Left ventricle myocardium inferior (tissue), 1 donor: ENCODE measurements at regions of chr3 and their contacts with region 1.

Region 1: DNA sequence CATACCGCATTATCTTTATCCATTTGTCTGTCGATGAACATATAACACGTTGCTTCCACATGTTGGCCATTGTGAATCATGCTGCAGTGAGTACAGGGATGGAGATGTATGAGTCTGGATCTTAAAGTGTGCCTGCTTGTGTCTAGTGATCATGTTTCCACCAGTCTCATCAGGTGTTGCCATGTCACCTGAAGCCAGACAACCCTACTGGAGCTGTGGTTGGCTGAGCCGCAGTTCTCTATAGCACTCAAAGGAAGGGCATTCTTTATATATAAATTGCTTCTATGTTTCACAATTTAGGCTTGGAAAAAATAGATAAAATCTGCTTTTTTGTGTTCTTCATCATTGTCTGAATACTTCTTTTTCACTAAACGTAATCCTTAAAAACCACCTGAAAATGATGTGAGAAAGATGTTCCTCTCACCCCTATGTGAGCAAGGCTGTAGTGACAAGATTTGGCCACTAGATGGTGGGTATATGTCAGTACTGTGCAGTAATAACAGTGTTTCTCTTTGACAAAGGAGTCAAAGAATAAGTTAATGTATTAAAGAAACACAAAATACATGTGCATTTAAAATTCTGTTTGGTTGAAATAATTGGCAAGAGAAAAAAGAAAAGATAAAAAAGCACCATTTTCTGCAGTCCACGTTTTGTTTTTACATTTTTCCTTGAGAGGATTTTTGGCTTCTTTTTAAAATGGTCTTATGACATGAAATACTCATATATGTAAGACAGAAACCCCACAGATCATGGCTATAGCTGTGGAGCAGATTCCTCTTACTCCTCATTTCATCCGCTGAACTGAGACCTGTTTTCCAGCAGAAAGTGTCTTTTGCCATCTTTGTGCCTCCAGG is 394.5 kb upstream of the DPPA4 start:
- DNase-seq: no peak
- H3K4me3 ChIP-seq: no peak overlapping the region
- H3K27ac ChIP-seq: no peak overlapping the region
- H3K4me1 ChIP-seq: no peaks in the 10 kb centered on the region
- H3K27me3 ChIP-seq: no peaks in the 10 kb centered on the region
- CTCF ChIP-seq: peak; percentile 86

Region 2: DNA sequence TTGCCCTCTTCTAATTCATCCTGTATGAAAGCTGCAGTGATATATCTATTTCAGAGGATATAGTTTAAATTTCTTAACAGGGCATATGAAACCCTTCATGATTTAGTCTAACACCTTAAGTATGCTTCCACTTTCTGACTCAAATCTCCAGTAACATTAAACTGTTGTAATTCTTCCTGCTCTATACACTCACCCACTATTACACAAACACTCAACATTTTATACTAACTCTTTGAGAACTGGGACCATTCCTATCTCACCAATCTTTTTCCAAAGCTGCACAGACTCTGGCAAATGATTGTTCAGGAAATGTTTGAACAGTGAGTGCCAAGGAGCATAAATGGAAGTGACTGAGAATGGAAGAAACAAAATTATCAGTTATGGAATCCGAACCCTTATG is 165.9 kb after region 1 on chr3:
- intact Hi-C with region 1: no loop called
- DNase-seq: no peak
- H3K4me3 ChIP-seq: no peak overlapping the region
- H3K27ac ChIP-seq: no peak overlapping the region
- H3K4me1 ChIP-seq: no peaks in the 10 kb centered on the region
- H3K27me3 ChIP-seq: no peaks in the 10 kb centered on the region
- CTCF ChIP-seq: no peak

Region 3: DNA sequence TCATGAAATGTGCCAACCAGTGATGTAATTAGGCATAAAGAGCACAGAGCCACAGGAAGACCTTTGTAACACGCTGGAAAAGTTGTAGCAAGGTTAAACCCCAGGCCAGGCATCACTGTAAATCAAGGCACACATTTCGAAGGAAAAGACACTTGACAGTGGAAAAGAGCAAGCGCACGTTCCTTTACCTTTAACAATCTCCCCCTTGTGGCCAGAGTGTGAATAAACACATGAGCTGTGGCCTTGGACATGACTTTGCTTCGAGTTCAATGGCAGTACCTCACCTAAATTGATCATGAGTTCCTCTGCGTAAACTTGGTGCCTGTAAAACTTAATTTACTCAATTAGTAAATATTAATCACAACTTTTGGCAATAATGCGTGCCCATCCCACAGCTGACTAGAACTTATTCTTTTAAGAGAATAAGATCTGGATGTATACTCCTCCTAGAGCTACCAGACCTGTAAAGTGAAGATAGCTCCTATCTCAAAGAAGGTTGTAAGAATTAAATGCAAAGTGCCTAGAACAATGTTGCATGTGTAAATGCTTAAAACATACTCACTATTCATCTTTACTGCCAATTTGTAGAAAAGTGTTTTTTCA is 582.8 kb after region 1 on chr3:
- intact Hi-C with region 1: loop called (anchors 10 kb)
- DNase-seq: no peak
- H3K4me3 ChIP-seq: no peak overlapping the region
- H3K27ac ChIP-seq: no peak overlapping the region
- H3K4me1 ChIP-seq: no peaks in the 10 kb centered on the region
- H3K27me3 ChIP-seq: peaks cover 4% of the 10 kb centered on the region
- CTCF ChIP-seq: peak; percentile 83